IMR-90 (cell line): ENCODE measurements at regions of chr9 and their contacts with region 1.

Region 1: DNA sequence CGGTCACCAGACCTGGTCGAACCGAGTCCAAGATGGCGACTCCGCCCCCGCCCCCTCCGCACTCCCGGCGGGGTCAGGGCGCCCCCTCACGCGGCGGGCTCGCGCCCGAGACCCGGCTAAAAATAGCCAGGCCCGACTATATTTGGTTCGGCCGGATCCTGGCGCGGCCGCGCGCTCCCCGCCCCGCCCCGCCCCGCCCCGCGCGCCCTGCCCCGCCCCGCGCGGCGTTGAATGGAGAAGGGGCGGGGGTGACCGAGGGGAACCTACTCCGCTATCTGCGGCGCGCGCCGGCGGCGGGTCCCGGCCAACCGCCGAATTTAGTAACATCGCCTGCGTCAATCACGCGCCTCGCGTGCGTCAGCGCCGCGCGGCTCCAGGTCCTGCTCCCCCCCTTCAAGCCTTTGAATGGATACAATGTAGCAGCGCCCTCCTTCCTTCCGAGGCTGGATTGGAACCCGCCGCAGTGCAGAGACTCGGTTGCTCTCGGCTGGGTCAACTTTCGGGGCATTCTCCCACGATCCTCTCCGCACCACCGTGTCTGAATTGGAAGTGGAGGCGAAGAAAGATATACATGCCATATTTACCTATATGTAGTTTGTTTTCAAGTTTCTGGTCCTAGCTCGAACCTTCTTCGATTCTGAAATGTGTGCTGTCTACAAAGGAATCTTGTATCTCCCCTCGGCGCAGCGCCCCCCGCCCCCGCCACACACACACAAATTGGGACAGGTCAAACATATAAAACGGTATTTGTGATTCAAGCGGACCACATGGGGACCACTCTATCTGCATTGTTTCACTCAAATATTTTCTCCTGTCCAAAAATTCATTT is 1.6 kb upstream of the NR4A3 start:
- DNase-seq: peak; percentile 96
- ATAC-seq: peak; percentile 73
- H3K4me3 ChIP-seq: peak overlapping the region; percentile 78
- H3K27ac ChIP-seq: peak overlapping the region; percentile 91
- H3K4me1 ChIP-seq: peaks cover 6% of the 10 kb centered on the region
- H3K27me3 ChIP-seq: no peaks in the 10 kb centered on the region
- CTCF ChIP-seq: peak; percentile 24; the same call in 1 of the 2 replicates
- POLR2A ChIP-seq: peak; percentile 82; the same call in 1 of the 2 replicates
- RAD21 ChIP-seq: peak; percentile 29; the same call in 1 of the 2 replicates

Region 2: GRCh38 chr9:98860871-98861293 is 959.2 kb before region 1 on chr9:
- CTCF ChIA-PET with region 1: no interaction called
- POLR2A ChIA-PET with region 1: no interaction called
- dilution Hi-C with region 1: no loop called
- in situ Hi-C with region 1: loop called (anchors 25 kb)
- intact Hi-C with region 1: no loop called
- DNase-seq: peak; percentile 95
- ATAC-seq: peak; percentile 94
- H3K4me3 ChIP-seq: no peak overlapping the region
- H3K27ac ChIP-seq: peak overlapping the region; percentile 19; the same call in 1 of the 2 replicates
- H3K4me1 ChIP-seq: peaks cover 9% of the 10 kb centered on the region
- H3K27me3 ChIP-seq: no peaks in the 10 kb centered on the region
- CTCF ChIP-seq: peak; percentile 92
- POLR2A ChIP-seq: peak; percentile 42; the same call in 1 of the 2 replicates
- RAD21 ChIP-seq: peak; percentile 98

Region 3: DNA sequence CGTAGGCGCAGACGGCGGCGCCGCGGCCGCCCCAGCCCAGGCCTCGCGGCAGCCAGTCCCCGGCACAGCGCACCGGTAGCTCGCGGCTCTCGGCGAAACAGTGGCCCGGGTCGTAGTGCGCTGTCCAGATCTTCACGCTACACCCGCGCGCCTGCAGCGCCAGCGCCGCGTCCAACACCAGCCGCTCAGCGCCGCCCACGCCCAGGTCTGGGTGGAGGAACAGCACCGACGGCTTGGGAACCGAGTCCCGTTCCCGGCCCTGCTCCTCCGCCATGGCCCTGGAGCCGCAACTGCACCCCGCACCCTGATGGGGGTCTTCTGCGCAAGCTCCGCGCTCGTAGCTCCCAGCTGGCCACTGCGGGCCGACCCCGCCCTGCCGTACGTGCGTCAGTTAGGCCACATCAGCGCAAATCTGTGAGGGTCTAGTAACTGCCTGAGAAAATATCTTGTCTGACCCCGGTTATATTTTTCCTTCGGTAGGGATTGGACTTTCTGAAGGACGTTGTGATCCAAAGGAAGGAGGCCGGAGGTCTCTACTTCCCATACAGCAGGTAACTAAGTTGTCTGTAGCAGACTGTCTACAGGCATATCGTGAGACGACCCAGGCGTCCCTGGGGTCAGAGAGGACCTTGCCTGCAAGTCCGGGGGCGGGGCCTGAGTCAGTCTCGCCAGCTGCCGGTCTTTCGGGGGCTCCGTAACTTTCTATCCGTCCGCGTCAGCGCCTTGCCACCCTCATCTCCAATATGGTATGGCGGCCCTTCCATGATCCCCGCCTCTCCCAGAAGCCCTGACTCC is 598.3 kb before region 1 on chr9 and contains the starts of genes ALG2 and SEC61B:
- CTCF ChIA-PET with region 1: no interaction called
- POLR2A ChIA-PET with region 1: no interaction called
- dilution Hi-C with region 1: no loop called
- in situ Hi-C with region 1: no loop called
- intact Hi-C with region 1: loop called (anchors 2 kb)
- DNase-seq: peak; percentile 96
- ATAC-seq: peak; percentile 95
- H3K4me3 ChIP-seq: peak within 1 kb of the TSS; percentile 92
- H3K27ac ChIP-seq: peak within 1 kb of the TSS; percentile 98
- H3K4me1 ChIP-seq: no peaks in the 10 kb centered on the region; the same call in none of the 2 replicates
- H3K27me3 ChIP-seq: no peaks in the 10 kb centered on the region
- CTCF ChIP-seq: no peak
- POLR2A ChIP-seq: peak; percentile 96
- RAD21 ChIP-seq: no peak
- total RNA-seq, gene ALG2: 33.9 and 38.4 TPM in 2 replicates
- total RNA-seq, gene SEC61B: 180 and 184 TPM in 2 replicates

Region 4: DNA sequence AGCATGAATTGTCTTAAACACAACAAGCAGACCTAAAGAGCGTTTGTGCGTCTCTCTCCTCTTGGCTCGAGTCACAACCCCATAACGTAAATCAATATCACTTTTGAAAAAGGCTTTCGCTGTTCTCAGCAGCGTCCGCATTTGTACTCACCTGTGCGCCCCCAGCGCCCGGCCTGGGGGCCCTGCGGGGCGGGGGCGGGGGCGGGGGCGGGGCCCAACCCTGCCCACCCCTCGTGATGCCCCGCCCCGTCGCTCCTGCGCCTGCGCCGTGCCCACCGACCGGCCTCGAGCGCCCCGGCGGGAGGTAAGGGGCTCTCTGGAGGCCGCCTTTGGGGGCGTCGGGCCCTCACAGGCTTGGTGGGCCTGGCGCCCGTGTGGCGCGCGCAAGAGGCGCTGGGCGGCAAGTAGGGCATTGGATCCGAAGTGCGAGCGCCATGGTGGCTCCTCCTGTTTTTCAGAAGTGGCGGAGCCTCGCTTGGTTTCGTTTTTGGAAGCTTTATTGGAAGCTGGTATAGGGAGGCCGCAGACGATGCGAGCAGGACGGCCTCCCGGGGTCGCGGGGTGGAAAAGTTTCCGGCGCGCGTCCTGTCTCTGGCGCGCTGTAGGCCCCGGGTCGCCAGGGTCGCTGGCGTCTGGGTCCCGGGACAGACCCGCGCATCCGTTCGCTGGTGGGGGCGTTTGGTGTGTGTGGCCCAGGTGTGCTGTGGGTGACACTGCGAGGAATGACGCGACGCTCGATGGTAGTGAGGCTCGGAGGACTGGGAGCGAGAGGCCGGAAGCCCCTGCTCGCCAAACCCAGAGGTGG is 86.5 kb after region 1 on chr9 and contains the start of gene STX17:
- CTCF ChIA-PET with region 1: no interaction called
- POLR2A ChIA-PET with region 1: no interaction called
- dilution Hi-C with region 1: no loop called
- in situ Hi-C with region 1: no loop called
- intact Hi-C with region 1: loop called (anchors 1 kb)
- DNase-seq: peak; percentile 69
- ATAC-seq: peak; percentile 97
- H3K4me3 ChIP-seq: peak within 1 kb of the TSS; percentile 99
- H3K27ac ChIP-seq: peak within 1 kb of the TSS; percentile 91
- H3K4me1 ChIP-seq: no peaks in the 10 kb centered on the region
- H3K27me3 ChIP-seq: 0 out of 2 replicates have a peak, but pooled peaks cover 2% of the 10 kb centered on the region
- CTCF ChIP-seq: no peak
- POLR2A ChIP-seq: peak; percentile 67
- RAD21 ChIP-seq: no peak
- total RNA-seq, gene STX17: 11.7 and 17.2 TPM in 2 replicates

Region 5: DNA sequence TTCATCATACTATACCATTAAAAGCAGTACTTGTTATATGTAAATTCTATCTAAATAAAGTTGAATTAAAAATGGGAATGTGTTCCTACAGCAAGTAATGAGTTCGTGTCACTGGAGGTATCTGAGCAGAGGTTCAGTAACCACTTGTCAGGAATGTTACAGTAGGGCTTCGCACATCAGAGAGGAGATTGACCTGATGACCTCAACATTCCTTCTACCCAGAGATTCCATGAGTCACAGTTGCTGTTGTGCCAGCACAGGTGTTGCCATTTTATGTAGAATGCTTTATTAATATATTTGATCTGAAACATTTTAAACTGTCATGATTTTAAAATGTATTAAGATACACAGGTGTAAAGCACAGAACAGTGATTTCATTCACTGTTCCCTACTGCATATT is 146.7 kb after region 1 on chr9:
- CTCF ChIA-PET with region 1: no interaction called
- POLR2A ChIA-PET with region 1: no interaction called
- dilution Hi-C with region 1: no loop called
- in situ Hi-C with region 1: no loop called
- intact Hi-C with region 1: no loop called
- DNase-seq: peak; percentile 33
- ATAC-seq: peak; percentile 35; the same call in 1 of the 2 replicates
- H3K4me3 ChIP-seq: no peak overlapping the region
- H3K27ac ChIP-seq: no peak overlapping the region
- H3K4me1 ChIP-seq: no peaks in the 10 kb centered on the region; the same call in 1 of the 2 replicates
- H3K27me3 ChIP-seq: no peaks in the 10 kb centered on the region
- CTCF ChIP-seq: no peak
- POLR2A ChIP-seq: no peak
- RAD21 ChIP-seq: no peak

Region 6: GRCh38 chr9:100098887-100099721 is 279.0 kb after region 1 on chr9 and contains the starts of genes ERP44 and INVS:
- CTCF ChIA-PET with region 1: no interaction called
- POLR2A ChIA-PET with region 1: no interaction called
- dilution Hi-C with region 1: no loop called
- in situ Hi-C with region 1: no loop called
- intact Hi-C with region 1: loop called (anchors 2 kb)
- DNase-seq: peak; percentile 99
- ATAC-seq: peak; percentile 99
- H3K4me3 ChIP-seq: peak within 1 kb of the TSS; percentile 88
- H3K27ac ChIP-seq: peak within 1 kb of the TSS; percentile 77
- H3K4me1 ChIP-seq: peaks cover 2% of the 10 kb centered on the region; the same call in 1 of the 2 replicates
- H3K27me3 ChIP-seq: no peaks in the 10 kb centered on the region
- CTCF ChIP-seq: no peak
- POLR2A ChIP-seq: peak; percentile 89
- RAD21 ChIP-seq: no peak
- total RNA-seq, gene ERP44: 9.1 and 16.1 TPM in 2 replicates
- total RNA-seq, gene INVS: 25.3 and 33.5 TPM in 2 replicates

Region 7: DNA sequence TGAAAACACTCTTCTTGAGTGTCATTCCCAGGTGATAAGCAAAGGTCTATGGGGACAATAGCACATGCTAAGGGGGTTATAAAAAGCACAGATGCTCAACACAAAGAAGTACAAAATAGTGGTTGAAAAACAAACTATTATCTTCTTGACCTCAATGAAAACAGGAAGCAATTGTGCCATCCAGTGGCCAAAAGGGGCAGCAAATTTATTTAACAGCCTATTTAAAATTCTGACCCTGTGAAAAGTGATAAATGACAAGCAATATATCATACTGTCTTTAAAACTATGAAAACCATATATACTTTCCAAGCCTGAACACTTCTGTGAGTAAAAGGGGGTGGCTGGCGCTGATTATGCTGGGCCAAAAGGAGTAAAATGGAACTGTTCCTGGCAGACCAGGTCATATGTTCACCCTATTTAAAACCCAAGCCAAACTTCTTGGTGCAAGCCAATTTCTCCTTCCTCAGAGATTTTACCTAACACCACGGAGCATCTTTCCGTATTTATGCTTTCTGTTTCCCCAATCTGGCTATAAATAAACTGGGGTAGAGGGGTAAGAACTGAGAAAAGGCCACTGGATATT is 503.0 kb after region 1 on chr9:
- CTCF ChIA-PET with region 1: no interaction called
- POLR2A ChIA-PET with region 1: no interaction called
- dilution Hi-C with region 1: no loop called
- in situ Hi-C with region 1: no loop called
- intact Hi-C with region 1: loop called (anchors 5 kb)
- DNase-seq: peak; percentile 51
- ATAC-seq: peak; percentile 66; the same call in 1 of the 2 replicates
- H3K4me3 ChIP-seq: no peak overlapping the region
- H3K27ac ChIP-seq: no peak overlapping the region
- H3K4me1 ChIP-seq: no peaks in the 10 kb centered on the region
- H3K27me3 ChIP-seq: no peaks in the 10 kb centered on the region
- CTCF ChIP-seq: peak; percentile 76
- POLR2A ChIP-seq: no peak
- RAD21 ChIP-seq: peak; percentile 66